ENCODE measurements at regions of chr22 and their contacts with region 1.

Region 1: DNA sequence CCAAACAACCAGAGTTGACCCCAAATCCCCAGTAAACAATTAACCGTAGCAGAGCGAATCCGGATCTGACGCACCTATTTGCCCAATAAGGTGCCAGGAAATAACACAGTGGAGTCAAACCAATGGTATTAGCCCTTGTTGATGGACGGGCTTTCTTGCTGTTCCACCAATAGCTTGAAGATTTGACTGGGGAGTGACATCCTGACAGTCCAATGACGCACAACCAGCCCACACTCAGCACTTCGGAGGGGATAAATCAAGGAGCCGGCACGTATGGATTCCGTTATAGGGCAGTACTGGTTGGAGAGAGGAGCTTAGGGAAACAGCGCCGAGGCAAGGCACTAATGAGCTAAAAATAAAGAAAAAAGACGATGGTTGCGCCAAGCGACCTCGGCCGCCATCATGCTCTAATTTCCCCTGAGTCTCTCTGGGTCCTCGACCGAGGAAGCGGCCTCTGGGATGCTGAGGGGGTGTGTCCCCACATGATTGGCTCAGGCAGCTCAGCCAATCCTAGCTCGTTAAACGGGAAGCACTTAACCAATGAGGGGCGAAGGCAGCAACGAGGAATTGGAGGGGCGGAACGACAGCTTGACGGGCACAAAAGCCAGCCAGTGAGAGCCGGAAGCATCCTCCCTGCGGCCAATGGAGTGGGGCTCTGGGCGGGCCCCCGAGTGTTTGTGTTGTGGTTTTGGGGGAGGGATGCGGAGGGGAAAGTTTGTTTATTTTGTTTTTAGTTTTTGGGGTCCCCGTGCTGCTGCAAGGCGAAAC is 49.5 kb downstream of the FAM83F start:
- DNase-seq: peak; percentile 96 to 100 (median 98)
- ATAC-seq: peak; percentile 86
- H3K4me3 ChIP-seq: peak overlapping the region; percentile 67
- H3K4me3 Mint-ChIP-seq: peak overlapping the region; percentile 97
- H3K27ac ChIP-seq: peak overlapping the region; percentile 97 to 100
- H3K27ac Mint-ChIP-seq: peak overlapping the region; percentile 98
- H3K4me1 ChIP-seq: peaks cover 43% of the 10 kb centered on the region
- H3K4me1 Mint-ChIP-seq: peaks cover 45% of the 10 kb centered on the region
- H3K27me3 ChIP-seq: peaks cover 0 to 4% of the 10 kb centered on the region in 2 experiments
- H3K27me3 Mint-ChIP-seq: peaks cover 7% of the 10 kb centered on the region
- CTCF ChIP-seq: no peak

Region 2: DNA sequence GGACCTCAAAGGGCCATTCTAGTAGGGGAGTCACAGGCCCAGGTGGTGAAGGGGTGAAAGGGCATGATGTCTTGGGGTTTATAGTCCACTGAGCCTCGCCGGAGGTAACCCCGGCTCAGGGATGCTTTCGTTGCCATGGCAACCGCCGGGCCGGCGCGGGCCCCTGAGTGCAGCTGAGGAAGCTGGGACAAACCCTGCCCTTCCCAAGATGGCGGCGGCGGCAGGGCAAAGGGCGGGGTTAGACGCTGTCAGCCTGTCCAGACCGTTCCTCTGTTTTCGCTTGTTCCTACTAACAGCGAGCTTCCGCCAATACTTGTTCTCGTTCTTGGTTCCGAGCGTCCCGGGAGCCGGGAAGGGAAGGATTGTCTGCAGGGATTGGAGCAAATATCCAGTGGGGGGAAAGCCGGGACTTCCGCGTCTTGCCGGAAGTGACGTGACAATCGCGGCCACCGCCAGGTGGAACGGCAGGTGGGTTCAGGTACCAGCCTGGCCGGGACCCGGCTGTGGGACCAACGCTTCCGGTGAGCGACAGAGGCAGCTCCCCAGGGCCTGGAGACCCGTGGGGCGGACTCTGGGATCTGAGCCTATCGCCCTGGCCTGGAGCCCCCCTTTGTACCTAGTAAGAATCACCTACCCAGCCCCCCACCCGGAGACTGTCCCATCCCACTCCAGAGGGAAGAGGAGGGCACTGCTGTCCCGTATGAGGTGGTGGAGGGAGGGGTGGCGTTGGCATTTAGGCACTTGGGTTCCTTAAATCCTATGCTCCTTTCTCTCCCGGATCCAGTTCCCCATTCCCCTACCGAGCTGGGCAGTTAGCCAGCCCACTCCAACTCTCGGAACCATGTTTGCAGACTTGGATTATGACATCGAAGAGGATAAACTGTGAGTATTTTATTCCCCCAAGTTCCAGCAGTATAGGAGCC is 1987.1 kb before region 1 on chr22 and contains the start of gene PICK1:
- CTCF ChIA-PET with region 1: no interaction called
- POLR2A ChIA-PET with region 1: no interaction called
- intact Hi-C with region 1: no loop called
- DNase-seq: peak; percentile 56 to 92 (median 74)
- ATAC-seq: peak; percentile 84
- H3K4me3 ChIP-seq: peak within 1 kb of the TSS; percentile 91
- H3K4me3 Mint-ChIP-seq: peak within 1 kb of the TSS; percentile 98
- H3K27ac ChIP-seq: peak within 1 kb of the TSS; percentile 84 to 94
- H3K27ac Mint-ChIP-seq: peak within 1 kb of the TSS; percentile 99
- H3K4me1 ChIP-seq: peaks cover 27% of the 10 kb centered on the region
- H3K4me1 Mint-ChIP-seq: peaks cover 20% of the 10 kb centered on the region
- H3K27me3 ChIP-seq: no peaks in the 10 kb centered on the region
- H3K27me3 Mint-ChIP-seq: no peaks in the 10 kb centered on the region
- CTCF ChIP-seq: no peak
- total RNA-seq, gene PICK1: 21.2 to 25.6 TPM

Region 3: GRCh38 chr22:39405346-39406085 is 638.8 kb before region 1 on chr22:
- CTCF ChIA-PET with region 1: no interaction called
- POLR2A ChIA-PET with region 1: interaction called, 16 read pairs
- intact Hi-C with region 1: loop called in 1 of 2 experiments (anchors 10 kb)
- DNase-seq: peak in 2 of 14 experiments; percentile 11 to 15
- ATAC-seq: peak; percentile 93
- H3K4me3 ChIP-seq: no peak overlapping the region
- H3K4me3 Mint-ChIP-seq: peak overlapping the region; percentile 9
- H3K27ac ChIP-seq: no peak overlapping the region
- H3K27ac Mint-ChIP-seq: no peak overlapping the region
- H3K4me1 ChIP-seq: peaks cover 35% of the 10 kb centered on the region
- H3K4me1 Mint-ChIP-seq: peaks cover 70% of the 10 kb centered on the region
- H3K27me3 ChIP-seq: no peaks in the 10 kb centered on the region
- H3K27me3 Mint-ChIP-seq: no peaks in the 10 kb centered on the region
- CTCF ChIP-seq: no peak

Region 4: DNA sequence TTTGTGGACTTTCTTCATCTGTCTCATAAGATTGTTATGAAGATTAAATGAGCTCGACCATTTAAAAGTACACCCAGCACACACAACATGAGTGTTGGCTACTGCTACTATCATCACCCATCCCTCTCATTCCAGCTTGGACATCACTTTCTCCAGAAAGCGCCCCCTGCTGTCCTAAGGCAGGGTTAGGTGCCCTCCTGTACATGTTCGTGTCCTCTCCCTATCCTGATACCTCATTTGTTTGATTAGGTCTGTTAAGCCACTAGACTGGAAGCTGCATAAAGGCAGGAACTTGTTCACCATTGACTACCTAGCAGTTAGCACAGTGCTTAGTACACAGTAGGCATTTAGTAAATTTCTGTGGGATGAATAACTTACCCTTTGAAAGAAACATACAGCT is 236.2 kb before region 1 on chr22:
- CTCF ChIA-PET with region 1: no interaction called
- POLR2A ChIA-PET with region 1: no interaction called
- intact Hi-C with region 1: no loop called
- DNase-seq: peak in 6 of 14 experiments; percentile 2 to 53 (median 32)
- ATAC-seq: no peak
- H3K4me3 ChIP-seq: no peak overlapping the region
- H3K4me3 Mint-ChIP-seq: no peak overlapping the region
- H3K27ac ChIP-seq: no peak overlapping the region
- H3K27ac Mint-ChIP-seq: no peak overlapping the region
- H3K4me1 ChIP-seq: peaks cover 3% of the 10 kb centered on the region
- H3K4me1 Mint-ChIP-seq: peaks cover 26% of the 10 kb centered on the region
- H3K27me3 ChIP-seq: no peaks in the 10 kb centered on the region
- H3K27me3 Mint-ChIP-seq: peaks cover 4% of the 10 kb centered on the region
- CTCF ChIP-seq: no peak

Region 5: DNA sequence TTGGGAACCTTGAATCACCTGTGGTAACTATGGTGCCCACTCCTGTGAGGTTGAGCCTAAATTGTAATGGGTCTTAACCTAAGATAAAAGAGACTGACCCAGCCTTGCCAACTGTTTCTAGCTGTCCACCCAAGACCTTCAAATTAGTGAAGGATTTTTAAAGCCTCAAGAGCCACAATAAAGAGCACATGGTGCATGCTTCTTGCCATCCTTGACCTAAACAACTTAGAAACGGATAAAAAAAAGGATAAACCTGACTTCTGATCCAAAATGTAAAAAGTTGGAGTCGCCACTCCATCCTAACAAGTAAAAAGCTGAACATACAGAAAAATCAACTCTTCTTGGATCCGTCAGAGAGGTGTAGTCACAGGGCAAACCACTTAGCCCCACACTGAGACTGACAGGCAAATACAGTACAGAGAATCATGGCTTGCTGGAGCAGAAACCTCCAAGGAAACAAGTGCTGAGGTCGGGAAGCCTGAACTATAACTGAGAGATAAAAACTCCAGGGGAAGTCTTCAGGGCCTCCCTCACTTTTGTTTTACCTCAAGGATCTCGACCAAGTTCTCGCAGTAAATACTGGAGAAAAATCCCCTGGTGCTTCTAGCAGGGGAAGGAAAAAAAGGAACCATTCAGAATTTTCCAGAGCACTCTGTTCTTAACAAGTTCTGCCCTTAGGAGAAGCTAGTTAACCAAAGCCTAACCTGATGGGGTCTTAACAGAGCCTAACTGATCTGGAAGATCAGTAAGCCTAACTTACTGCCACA is 167.0 kb before region 1 on chr22:
- CTCF ChIA-PET with region 1: no interaction called
- POLR2A ChIA-PET with region 1: no interaction called
- intact Hi-C with region 1: no loop called
- DNase-seq: no peak
- ATAC-seq: no peak
- H3K4me3 ChIP-seq: no peak overlapping the region
- H3K4me3 Mint-ChIP-seq: no peak overlapping the region
- H3K27ac ChIP-seq: no peak overlapping the region
- H3K27ac Mint-ChIP-seq: no peak overlapping the region
- H3K4me1 ChIP-seq: no peaks in the 10 kb centered on the region
- H3K4me1 Mint-ChIP-seq: no peaks in the 10 kb centered on the region
- H3K27me3 ChIP-seq: no peaks in the 10 kb centered on the region
- H3K27me3 Mint-ChIP-seq: no peaks in the 10 kb centered on the region
- CTCF ChIP-seq: no peak

Region 6: DNA sequence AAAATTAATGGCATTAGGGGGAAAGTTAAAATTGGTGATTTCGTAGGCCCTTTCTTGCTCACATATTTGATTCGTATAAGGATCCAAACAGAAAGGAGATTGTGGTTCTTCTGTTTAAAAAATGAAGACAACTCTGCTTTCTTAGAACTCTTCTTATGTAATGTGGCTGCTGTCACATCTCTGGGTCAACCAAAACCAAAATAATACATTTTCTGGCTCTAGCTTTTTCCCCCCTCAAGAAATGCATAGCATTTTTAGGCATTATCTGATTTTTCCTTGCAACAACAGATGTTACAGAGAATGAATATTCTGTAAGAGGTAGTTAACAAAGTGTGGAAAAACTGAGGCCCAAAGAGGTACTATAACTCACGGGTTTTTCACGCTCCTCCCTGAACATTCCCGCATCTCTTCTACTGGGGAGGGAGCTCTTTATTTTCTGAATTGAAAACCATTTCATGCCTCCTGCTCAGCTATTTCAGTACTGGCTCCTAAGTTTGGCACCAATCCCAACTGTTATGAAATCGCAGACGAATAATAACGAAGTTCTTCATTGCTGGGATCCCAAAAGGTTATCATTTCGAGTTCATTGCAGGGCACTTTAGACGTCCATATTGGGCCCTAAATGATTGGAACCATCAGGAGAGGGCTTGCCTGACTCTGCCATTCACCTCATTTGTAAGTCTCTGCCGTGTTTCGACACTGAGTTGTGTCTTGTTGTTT is 126.3 kb before region 1 on chr22:
- CTCF ChIA-PET with region 1: no interaction called
- POLR2A ChIA-PET with region 1: interaction called, 12 read pairs
- intact Hi-C with region 1: no loop called
- DNase-seq: peak in 2 of 14 experiments; percentile 17 to 41
- ATAC-seq: no peak
- H3K4me3 ChIP-seq: peak overlapping the region; percentile 20
- H3K4me3 Mint-ChIP-seq: peak overlapping the region; percentile 52
- H3K27ac ChIP-seq: peak overlapping the region; percentile 61 to 73
- H3K27ac Mint-ChIP-seq: no peak overlapping the region
- H3K4me1 ChIP-seq: peaks cover 80% of the 10 kb centered on the region
- H3K4me1 Mint-ChIP-seq: peaks cover 92% of the 10 kb centered on the region
- H3K27me3 ChIP-seq: no peaks in the 10 kb centered on the region
- H3K27me3 Mint-ChIP-seq: no peaks in the 10 kb centered on the region
- CTCF ChIP-seq: no peak

Region 7: DNA sequence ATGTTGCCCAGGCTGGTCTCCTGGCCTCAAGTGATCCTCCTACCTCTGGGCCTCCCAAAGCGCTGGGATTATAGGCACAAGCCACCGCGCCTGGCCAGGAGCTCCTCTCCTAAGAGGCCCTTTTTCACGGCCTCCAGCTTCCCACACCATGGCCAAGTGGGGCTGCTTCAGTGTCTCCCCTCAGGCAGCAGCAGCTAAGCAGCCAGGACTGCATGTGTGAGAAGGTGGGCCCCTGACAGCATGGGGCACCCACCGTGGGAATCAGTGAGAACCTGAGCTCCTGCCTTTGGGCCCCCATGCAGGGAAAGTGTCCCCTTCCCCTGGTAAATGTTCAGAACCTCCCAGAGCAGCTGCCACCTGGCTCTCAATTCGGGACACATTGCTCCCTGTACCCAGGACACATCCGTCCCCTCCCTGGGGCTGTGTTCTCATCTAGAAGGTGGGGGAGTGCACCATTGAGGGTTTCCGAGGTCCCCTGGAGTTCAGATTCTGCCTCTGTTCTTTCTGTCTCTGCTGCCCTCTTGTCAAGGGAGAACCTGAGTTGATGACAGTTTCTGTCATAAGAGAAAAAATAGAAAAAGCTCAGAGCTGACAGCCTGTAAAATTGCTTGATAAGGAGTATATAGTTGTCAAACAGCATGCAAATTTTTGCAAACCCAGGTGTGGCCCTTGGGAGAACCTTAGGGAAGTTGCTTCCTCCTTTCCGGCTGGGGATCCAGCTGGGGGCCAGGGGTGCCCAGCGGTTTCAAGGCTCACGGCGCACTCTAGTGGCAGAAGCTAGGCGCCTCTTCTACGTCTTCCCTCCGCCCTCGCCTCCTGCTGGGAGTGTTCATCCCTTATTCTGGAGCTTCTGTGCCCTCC is 19.9 kb before region 1 on chr22:
- CTCF ChIA-PET with region 1: interaction called, 8 read pairs
- POLR2A ChIA-PET with region 1: interaction called, 11 read pairs
- intact Hi-C with region 1: no loop called
- DNase-seq: peak; percentile 40 to 80 (median 53)
- ATAC-seq: peak; percentile 82
- H3K4me3 ChIP-seq: no peak overlapping the region
- H3K4me3 Mint-ChIP-seq: no peak overlapping the region
- H3K27ac ChIP-seq: no peak overlapping the region
- H3K27ac Mint-ChIP-seq: no peak overlapping the region
- H3K4me1 ChIP-seq: peaks cover 7% of the 10 kb centered on the region
- H3K4me1 Mint-ChIP-seq: peaks cover 4% of the 10 kb centered on the region
- H3K27me3 ChIP-seq: no peaks in the 10 kb centered on the region
- H3K27me3 Mint-ChIP-seq: no peaks in the 10 kb centered on the region
- CTCF ChIP-seq: peak; percentile 93

Region 8: GRCh38 chr22:40116496-40117200 is 72.4 kb after region 1 on chr22:
- CTCF ChIA-PET with region 1: no interaction called
- POLR2A ChIA-PET with region 1: interaction called, 46 read pairs
- intact Hi-C with region 1: loop called in 1 of 2 experiments (anchors 2 kb)
- DNase-seq: peak; percentile 17 to 87 (median 54)
- ATAC-seq: peak; percentile 94
- H3K4me3 ChIP-seq: no peak overlapping the region
- H3K4me3 Mint-ChIP-seq: peak overlapping the region; percentile 74
- H3K27ac ChIP-seq: peak overlapping the region; percentile 39 to 56
- H3K27ac Mint-ChIP-seq: peak overlapping the region; percentile 87
- H3K4me1 ChIP-seq: peaks cover 67% of the 10 kb centered on the region
- H3K4me1 Mint-ChIP-seq: peaks cover 95% of the 10 kb centered on the region
- H3K27me3 ChIP-seq: no peaks in the 10 kb centered on the region
- H3K27me3 Mint-ChIP-seq: no peaks in the 10 kb centered on the region
- CTCF ChIP-seq: no peak

Region 9: GRCh38 chr22:40289991-40290459 is 245.7 kb after region 1 on chr22:
- CTCF ChIA-PET with region 1: no interaction called
- POLR2A ChIA-PET with region 1: interaction called, 14 read pairs
- intact Hi-C with region 1: no loop called
- DNase-seq: peak; percentile 49 to 90 (median 70)
- ATAC-seq: peak; percentile 85
- H3K4me3 ChIP-seq: peak overlapping the region; percentile 2
- H3K4me3 Mint-ChIP-seq: peak overlapping the region; percentile 70
- H3K27ac ChIP-seq: peak overlapping the region; percentile 83 to 94
- H3K27ac Mint-ChIP-seq: peak overlapping the region; percentile 98
- H3K4me1 ChIP-seq: peaks cover 44% of the 10 kb centered on the region
- H3K4me1 Mint-ChIP-seq: peaks cover 65% of the 10 kb centered on the region
- H3K27me3 ChIP-seq: no peaks in the 10 kb centered on the region
- H3K27me3 Mint-ChIP-seq: no peaks in the 10 kb centered on the region
- CTCF ChIP-seq: no peak